WTC11 (cell line): ENCODE measurements at regions of chr11 and their contacts with region 1.

Region 1: DNA sequence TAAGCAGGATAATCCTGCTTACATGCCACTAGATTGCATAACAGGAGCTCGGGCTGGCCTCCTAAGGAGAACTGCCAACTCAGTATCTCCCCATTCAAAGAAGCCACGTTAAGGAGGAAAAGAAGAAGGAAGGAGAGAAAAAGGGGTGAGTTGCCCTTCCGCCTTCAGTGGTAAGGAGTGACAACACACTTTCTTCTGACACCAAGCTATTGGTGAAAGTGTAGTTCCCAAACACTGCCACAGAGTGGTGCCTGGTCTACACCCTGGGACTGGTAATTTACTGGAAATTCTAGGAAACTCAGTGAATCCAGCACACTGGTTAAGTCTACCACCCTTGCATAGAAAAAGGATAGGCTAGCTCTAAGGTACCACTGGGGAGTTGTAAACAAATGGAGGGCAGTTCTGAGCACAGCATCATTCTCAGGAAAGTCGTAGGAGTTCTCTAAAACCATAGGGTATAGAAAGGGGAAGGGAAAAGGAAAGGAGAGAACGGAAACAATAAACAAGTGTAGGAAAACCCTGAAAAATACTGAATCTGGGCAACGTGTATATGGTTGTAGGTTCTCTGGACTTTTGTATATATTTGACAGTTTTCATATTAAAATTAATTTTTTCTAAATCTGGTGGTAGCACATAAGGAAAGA is 58.2 kb downstream of the RRAS2 start:
- DNase-seq: peak; percentile 69
- ATAC-seq: peak; percentile 95
- H3K4me3 Mint-ChIP-seq: no peak overlapping the region
- H3K27ac Mint-ChIP-seq: no peak overlapping the region
- H3K4me1 Mint-ChIP-seq: peaks cover 62% of the 10 kb centered on the region
- H3K27me3 Mint-ChIP-seq: no peaks in the 10 kb centered on the region
- CTCF ChIP-seq: no peak; the same call in 1 of the 2 replicates

Region 2: DNA sequence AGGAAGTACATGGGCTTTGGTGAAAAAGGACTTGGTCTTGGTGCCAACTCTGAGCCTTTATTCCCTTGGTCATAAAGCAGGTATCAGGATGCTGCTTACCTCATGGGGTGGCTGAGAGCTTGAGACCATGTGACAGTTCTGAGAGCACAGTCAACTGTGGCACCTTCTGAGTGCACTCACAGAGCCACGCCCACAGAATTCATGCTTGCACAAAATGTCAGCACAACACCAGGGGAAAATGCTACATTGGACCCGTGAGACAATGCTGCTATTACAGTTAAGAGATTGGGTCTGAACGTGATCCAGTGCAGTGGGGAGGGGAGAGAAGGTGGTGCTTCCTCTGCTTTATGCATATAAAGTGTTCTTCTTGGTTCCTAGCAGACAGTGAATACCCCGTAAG is 417.7 kb before region 1 on chr11:
- CTCF ChIA-PET with region 1: no interaction called
- POLR2A ChIA-PET with region 1: no interaction called
- DNase-seq: no peak
- ATAC-seq: no peak
- H3K4me3 Mint-ChIP-seq: no peak overlapping the region
- H3K27ac Mint-ChIP-seq: no peak overlapping the region
- H3K4me1 Mint-ChIP-seq: no peaks in the 10 kb centered on the region
- H3K27me3 Mint-ChIP-seq: no peaks in the 10 kb centered on the region
- CTCF ChIP-seq: no peak

Region 3: GRCh38 chr11:13955971-13956421 is 344.8 kb before region 1 on chr11:
- CTCF ChIA-PET with region 1: no interaction called
- POLR2A ChIA-PET with region 1: no interaction called
- DNase-seq: peak; percentile 52
- ATAC-seq: peak; percentile 86
- H3K4me3 Mint-ChIP-seq: no peak overlapping the region
- H3K27ac Mint-ChIP-seq: no peak overlapping the region
- H3K4me1 Mint-ChIP-seq: 0 out of 2 replicates have a peak, but pooled peaks cover 3% of the 10 kb centered on the region
- H3K27me3 Mint-ChIP-seq: peaks cover 24% of the 10 kb centered on the region
- CTCF ChIP-seq: peak; percentile 87

Region 4: DNA sequence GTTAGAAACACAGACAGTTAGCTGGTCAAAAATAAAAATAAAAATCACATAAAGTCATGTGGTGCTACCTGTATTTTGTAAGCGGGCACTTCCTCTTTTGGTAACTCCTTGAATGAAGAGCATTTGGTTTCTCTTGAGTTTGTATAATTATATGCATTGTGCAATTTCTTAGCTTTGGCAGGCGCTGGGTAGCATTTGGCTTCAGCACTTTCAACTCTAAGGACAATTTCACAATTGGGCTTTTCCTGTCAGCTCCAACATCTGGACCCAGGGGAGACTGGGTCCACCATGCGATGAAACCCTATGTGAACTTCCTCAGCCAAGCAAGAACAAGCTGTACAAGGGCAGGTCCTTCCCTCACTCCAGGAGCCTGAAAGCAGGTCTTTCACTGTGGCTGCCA is 110.9 kb before region 1 on chr11:
- CTCF ChIA-PET with region 1: no interaction called
- POLR2A ChIA-PET with region 1: no interaction called
- DNase-seq: no peak
- ATAC-seq: no peak
- H3K4me3 Mint-ChIP-seq: no peak overlapping the region
- H3K27ac Mint-ChIP-seq: no peak overlapping the region
- H3K4me1 Mint-ChIP-seq: peaks cover 21% of the 10 kb centered on the region
- H3K27me3 Mint-ChIP-seq: no peaks in the 10 kb centered on the region; the same call in 1 of the 2 replicates
- CTCF ChIP-seq: no peak

Region 5: DNA sequence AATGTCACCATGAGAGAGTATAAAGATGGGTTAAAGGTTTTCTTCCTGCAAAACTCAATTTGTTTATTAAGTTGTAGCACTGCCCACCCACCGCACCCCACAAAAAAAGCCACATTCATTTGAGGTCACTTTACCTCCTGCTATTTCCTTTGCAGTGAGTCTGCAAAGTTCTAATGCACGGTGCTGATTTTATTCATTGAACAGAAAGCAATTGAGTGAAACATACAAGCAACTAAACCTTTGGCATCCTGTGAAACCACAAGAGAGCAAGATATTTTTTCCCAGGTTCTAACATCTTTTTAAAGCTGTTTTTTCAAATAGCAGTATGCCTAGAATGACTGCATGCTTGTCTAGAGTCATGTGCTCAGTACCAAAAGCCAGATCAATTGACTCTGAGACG is 19.2 kb after region 1 on chr11:
- CTCF ChIA-PET with region 1: interaction called, 11 read pairs
- POLR2A ChIA-PET with region 1: no interaction called
- DNase-seq: no peak
- ATAC-seq: no peak
- H3K4me3 Mint-ChIP-seq: no peak overlapping the region
- H3K27ac Mint-ChIP-seq: peak overlapping the region; percentile 90
- H3K4me1 Mint-ChIP-seq: peaks cover 83% of the 10 kb centered on the region
- H3K27me3 Mint-ChIP-seq: no peaks in the 10 kb centered on the region
- CTCF ChIP-seq: no peak

Region 6: DNA sequence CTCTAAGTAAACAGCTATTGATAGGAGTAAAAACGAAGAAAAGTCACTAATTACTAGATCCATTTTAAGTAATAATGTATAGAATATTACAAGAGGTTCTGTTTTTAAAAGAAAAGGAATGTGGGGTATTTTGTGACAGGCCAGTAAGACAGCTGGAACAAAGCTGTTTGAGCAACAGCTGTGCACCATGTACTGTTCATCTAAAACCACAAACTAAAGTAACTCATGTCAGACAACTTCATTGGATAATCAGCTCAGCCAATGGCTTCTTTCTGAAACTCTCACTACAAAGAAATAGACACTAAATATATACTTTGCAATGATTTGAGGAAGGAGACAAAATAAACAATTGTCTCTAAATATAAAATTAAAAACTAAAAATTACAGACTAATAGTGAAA is 42.1 kb after region 1 on chr11:
- CTCF ChIA-PET with region 1: interaction called, 11 read pairs
- POLR2A ChIA-PET with region 1: no interaction called
- DNase-seq: no peak
- ATAC-seq: no peak
- H3K4me3 Mint-ChIP-seq: no peak overlapping the region
- H3K27ac Mint-ChIP-seq: peak overlapping the region; percentile 98
- H3K4me1 Mint-ChIP-seq: peaks cover 70% of the 10 kb centered on the region
- H3K27me3 Mint-ChIP-seq: no peaks in the 10 kb centered on the region
- CTCF ChIP-seq: no peak

Region 7: GRCh38 chr11:14364322-14364721 is 63.5 kb after region 1 on chr11:
- CTCF ChIA-PET with region 1: interaction called, 12 read pairs
- POLR2A ChIA-PET with region 1: no interaction called
- DNase-seq: no peak
- ATAC-seq: peak; percentile 40; the same call in 1 of the 2 replicates
- H3K4me3 Mint-ChIP-seq: no peak overlapping the region
- H3K27ac Mint-ChIP-seq: no peak overlapping the region
- H3K4me1 Mint-ChIP-seq: peaks cover 25% of the 10 kb centered on the region
- H3K27me3 Mint-ChIP-seq: peaks cover 2% of the 10 kb centered on the region
- CTCF ChIP-seq: no peak

Region 8: DNA sequence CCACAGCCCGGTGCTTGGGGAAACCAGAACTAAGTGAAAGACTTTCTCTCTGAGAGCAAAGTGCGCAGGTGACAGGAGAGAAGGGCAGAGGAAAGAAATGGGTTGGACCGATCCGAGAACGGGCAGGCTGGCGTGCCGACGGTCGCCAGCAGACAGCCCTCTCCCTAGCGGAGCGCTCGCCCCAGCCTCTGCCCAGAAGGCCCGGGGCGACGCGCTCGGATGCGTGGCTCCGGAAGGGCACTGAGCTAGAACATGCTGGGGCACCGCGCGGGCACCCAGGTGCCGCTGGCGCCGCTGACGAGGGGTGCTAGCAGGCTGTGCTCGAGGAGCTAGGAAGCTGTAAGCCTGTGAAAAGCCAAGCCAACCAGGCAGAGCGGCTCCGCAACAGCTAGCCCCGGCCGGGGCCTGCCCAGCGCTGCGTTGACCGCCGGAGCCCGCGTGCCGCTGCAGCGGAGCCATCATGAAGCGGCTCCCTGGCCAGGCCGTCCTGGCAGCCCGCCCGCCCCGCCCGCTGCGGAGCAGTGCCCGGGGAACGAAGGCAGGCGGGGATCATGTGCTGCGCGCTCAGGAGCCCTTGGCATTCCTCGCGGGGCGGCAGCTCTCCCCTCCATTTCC is 80.3 kb after region 1 on chr11:
- CTCF ChIA-PET with region 1: interaction called, 10 read pairs
- POLR2A ChIA-PET with region 1: no interaction called
- DNase-seq: peak; percentile 69
- ATAC-seq: peak; percentile 90
- H3K4me3 Mint-ChIP-seq: peak overlapping the region; percentile 67
- H3K27ac Mint-ChIP-seq: no peak overlapping the region
- H3K4me1 Mint-ChIP-seq: peaks cover 9% of the 10 kb centered on the region; the same call in 1 of the 2 replicates
- H3K27me3 Mint-ChIP-seq: peaks cover 41% of the 10 kb centered on the region
- CTCF ChIP-seq: no peak

Region 9: GRCh38 chr11:14422052-14422813 is 121.5 kb after region 1 on chr11:
- CTCF ChIA-PET with region 1: interaction called, 255 read pairs
- POLR2A ChIA-PET with region 1: no interaction called
- DNase-seq: peak; percentile 69
- ATAC-seq: peak; percentile 91
- H3K4me3 Mint-ChIP-seq: no peak overlapping the region
- H3K27ac Mint-ChIP-seq: no peak overlapping the region
- H3K4me1 Mint-ChIP-seq: peaks cover 12% of the 10 kb centered on the region
- H3K27me3 Mint-ChIP-seq: no peaks in the 10 kb centered on the region; the same call in 1 of the 2 replicates
- CTCF ChIP-seq: no peak

Region 10: GRCh38 chr11:14480716-14481115 is 179.9 kb after region 1 on chr11:
- CTCF ChIA-PET with region 1: no interaction called
- POLR2A ChIA-PET with region 1: no interaction called
- DNase-seq: no peak
- ATAC-seq: no peak
- H3K4me3 Mint-ChIP-seq: no peak overlapping the region
- H3K27ac Mint-ChIP-seq: no peak overlapping the region
- H3K4me1 Mint-ChIP-seq: no peaks in the 10 kb centered on the region
- H3K27me3 Mint-ChIP-seq: no peaks in the 10 kb centered on the region
- CTCF ChIP-seq: no peak